WTC11 (cell line): ENCODE measurements at regions of chr6 and their contacts with region 1.

Region 1: GRCh38 chr6:6724539-6725467 is 136.3 kb downstream of the LY86 start:
- DNase-seq: peak; percentile 76
- ATAC-seq: peak; percentile 70
- H3K4me3 Mint-ChIP-seq: peak overlapping the region; percentile 56
- H3K27ac Mint-ChIP-seq: peak overlapping the region; percentile 73; the same call in 1 of the 2 replicates
- H3K4me1 Mint-ChIP-seq: peaks cover 41% of the 10 kb centered on the region
- H3K27me3 Mint-ChIP-seq: peaks cover 16% of the 10 kb centered on the region
- CTCF ChIP-seq: peak; percentile 17; the same call in 1 of the 2 replicates

Region 2: DNA sequence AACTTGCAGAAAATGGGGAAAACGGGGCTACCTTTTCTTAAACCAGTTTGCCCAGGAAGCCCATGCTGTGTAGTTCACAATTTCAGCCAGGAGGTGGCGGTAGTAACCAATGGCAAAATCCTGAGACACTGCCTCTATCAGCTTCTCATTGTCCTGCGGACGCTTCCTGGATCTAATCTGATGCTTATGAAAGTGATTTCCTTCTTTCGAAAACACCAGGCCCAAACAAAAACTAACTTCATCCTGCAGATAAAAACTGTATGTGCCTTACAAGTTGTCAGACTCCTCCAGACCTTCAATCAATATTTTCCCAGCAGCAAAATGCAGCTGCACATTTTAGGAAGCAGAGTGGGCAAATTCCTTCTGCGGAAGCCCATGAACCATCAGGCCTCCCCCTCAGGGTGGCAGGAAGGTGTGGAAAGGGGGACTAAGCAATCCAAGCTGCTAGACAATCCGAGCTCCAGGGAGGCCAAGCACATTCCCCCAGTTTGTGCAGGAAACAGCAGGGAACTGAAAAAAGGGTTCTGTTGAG is 47.8 kb before region 1 on chr6:
- CTCF ChIA-PET with region 1: interaction called, 24 read pairs
- POLR2A ChIA-PET with region 1: no interaction called
- DNase-seq: peak; percentile 86
- ATAC-seq: peak; percentile 69
- H3K4me3 Mint-ChIP-seq: 0 out of 2 replicates have a peak overlapping the region, but pooled peaks have one; percentile 16
- H3K27ac Mint-ChIP-seq: peak overlapping the region; percentile 39
- H3K4me1 Mint-ChIP-seq: peaks cover 29% of the 10 kb centered on the region
- H3K27me3 Mint-ChIP-seq: no peaks in the 10 kb centered on the region
- CTCF ChIP-seq: peak; percentile 95

Region 3: DNA sequence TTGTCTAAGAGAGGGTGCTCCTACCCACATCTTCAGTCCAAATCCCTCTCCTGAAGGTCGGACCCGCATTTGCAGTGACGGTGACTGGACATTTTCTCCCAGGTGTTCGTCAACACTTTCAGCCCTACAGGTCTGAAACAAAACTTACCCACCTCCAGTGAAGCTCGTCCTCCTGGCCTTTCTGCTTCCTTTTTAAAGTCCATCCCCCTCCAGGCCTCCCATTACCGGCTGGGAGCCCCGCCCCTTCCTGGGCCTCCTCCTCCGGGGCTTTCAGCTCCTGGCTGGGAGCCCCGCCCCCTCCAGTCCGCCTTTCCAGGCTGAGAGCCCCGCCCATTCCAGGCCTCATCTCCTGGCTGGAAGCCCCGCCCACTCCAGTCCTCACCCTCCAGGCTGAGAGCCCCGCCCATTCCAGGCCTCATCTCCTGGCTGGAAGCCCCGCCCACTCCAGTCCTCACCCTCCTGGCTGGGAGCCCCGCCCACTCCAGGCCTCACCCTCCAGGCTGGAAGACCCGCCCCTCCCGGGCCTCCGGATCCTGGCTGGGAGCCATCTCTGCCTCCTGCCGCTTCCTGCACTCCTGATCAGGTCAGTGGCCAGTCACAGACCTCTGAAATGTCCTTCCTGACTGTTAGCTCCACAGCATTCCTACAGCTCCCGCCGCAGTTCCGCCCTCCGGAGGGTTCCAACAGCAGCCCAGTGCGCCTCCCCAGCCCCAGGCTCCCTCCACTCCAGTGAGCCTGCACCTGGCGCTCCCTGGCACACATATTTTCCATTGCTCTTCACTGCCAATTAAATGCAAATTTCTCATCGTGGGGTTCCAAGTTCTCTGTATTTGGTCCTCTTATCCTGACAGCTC is 37.8 kb before region 1 on chr6:
- CTCF ChIA-PET with region 1: interaction called, 12 read pairs
- POLR2A ChIA-PET with region 1: no interaction called
- DNase-seq: peak; percentile 99
- ATAC-seq: peak; percentile 94
- H3K4me3 Mint-ChIP-seq: peak overlapping the region; percentile 77
- H3K27ac Mint-ChIP-seq: peak overlapping the region; percentile 98
- H3K4me1 Mint-ChIP-seq: peaks cover 37% of the 10 kb centered on the region
- H3K27me3 Mint-ChIP-seq: peaks cover 2% of the 10 kb centered on the region; the same call in 1 of the 2 replicates
- CTCF ChIP-seq: no peak

Region 4: DNA sequence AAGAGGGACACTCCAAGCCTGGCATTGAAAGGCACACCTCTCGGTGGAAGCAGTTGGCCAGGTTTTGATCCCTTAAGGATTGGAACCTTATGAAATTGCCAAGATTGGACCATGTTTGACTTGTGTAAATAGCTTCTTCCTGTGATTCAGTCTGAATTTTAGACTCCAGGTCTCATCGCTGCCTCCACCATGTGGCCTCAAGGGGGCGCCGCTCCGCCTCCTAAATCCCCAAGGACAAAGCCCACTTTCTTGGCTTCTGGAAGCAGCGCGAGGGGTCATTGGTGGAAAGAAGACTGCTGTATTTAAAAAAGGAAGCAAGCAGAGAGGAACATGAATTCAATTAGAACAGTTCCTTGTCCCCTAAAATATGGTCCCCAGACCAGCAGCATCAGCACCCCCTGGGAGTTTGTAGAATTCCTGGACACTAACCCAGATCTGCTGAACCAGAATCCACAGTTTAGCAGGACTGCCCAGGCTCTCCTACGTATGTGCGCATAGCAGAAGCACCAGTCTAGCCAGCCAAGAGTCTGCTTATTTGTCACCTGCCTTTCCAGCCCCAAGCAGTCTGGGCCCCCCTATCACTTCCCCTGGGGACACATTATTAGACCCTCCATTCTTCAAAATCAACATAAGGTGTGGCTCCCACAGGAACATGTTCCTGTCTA is 27.8 kb before region 1 on chr6:
- CTCF ChIA-PET with region 1: interaction called, 62 read pairs
- POLR2A ChIA-PET with region 1: interaction called, 3 read pairs
- DNase-seq: peak; percentile 79
- ATAC-seq: peak; percentile 26
- H3K4me3 Mint-ChIP-seq: no peak overlapping the region
- H3K27ac Mint-ChIP-seq: no peak overlapping the region
- H3K4me1 Mint-ChIP-seq: peaks cover 46% of the 10 kb centered on the region
- H3K27me3 Mint-ChIP-seq: peaks cover 17% of the 10 kb centered on the region
- CTCF ChIP-seq: peak; percentile 80

Region 5: GRCh38 chr6:6712258-6712999 is 12.4 kb before region 1 on chr6:
- CTCF ChIA-PET with region 1: interaction called, 10 read pairs
- POLR2A ChIA-PET with region 1: no interaction called
- DNase-seq: no peak
- ATAC-seq: peak; percentile 48
- H3K4me3 Mint-ChIP-seq: no peak overlapping the region
- H3K27ac Mint-ChIP-seq: no peak overlapping the region
- H3K4me1 Mint-ChIP-seq: peaks cover 38% of the 10 kb centered on the region
- H3K27me3 Mint-ChIP-seq: no peaks in the 10 kb centered on the region; the same call in 1 of the 2 replicates
- CTCF ChIP-seq: no peak

Region 6: GRCh38 chr6:6741224-6741623 is 16.4 kb after region 1 on chr6:
- CTCF ChIA-PET with region 1: interaction called, 10 read pairs
- POLR2A ChIA-PET with region 1: interaction called, 3 read pairs
- DNase-seq: no peak
- ATAC-seq: peak; percentile 18; the same call in 1 of the 2 replicates
- H3K4me3 Mint-ChIP-seq: no peak overlapping the region
- H3K27ac Mint-ChIP-seq: no peak overlapping the region
- H3K4me1 Mint-ChIP-seq: peaks cover 29% of the 10 kb centered on the region
- H3K27me3 Mint-ChIP-seq: no peaks in the 10 kb centered on the region; the same call in 1 of the 2 replicates
- CTCF ChIP-seq: no peak

Region 7: GRCh38 chr6:6758915-6759654 is 34.3 kb after region 1 on chr6:
- CTCF ChIA-PET with region 1: interaction called, 22 read pairs
- POLR2A ChIA-PET with region 1: interaction called, 5 read pairs
- DNase-seq: peak; percentile 80
- ATAC-seq: peak; percentile 97
- H3K4me3 Mint-ChIP-seq: peak overlapping the region; percentile 57
- H3K27ac Mint-ChIP-seq: peak overlapping the region; percentile 95
- H3K4me1 Mint-ChIP-seq: peaks cover 21% of the 10 kb centered on the region
- H3K27me3 Mint-ChIP-seq: no peaks in the 10 kb centered on the region
- CTCF ChIP-seq: peak; percentile 48